ENCODE measurements at regions of chr17 and their contacts with region 1.

Region 1: GRCh38 chr17:40803617-40804082 is 3.9 kb upstream of the KRT28 start:
- DNase-seq: peak; percentile 34 to 74 (median 54)
- ATAC-seq: peak; percentile 90
- H3K4me3 ChIP-seq: no peak overlapping the region
- H3K4me3 Mint-ChIP-seq: peak overlapping the region in 1 of 10 donors; percentile 33
- H3K27ac ChIP-seq: no peak overlapping the region
- H3K27ac Mint-ChIP-seq: no peak overlapping the region
- H3K4me1 ChIP-seq: no peaks in the 10 kb centered on the region
- H3K4me1 Mint-ChIP-seq: peaks cover 0 to 4% (median 3%) of the 10 kb centered on the region in 7 donors
- H3K27me3 ChIP-seq: peaks cover 0 to 4% of the 10 kb centered on the region in 2 donors
- H3K27me3 Mint-ChIP-seq: peaks cover 33 to 51% (median 48%) of the 10 kb centered on the region in 5 donors

Region 2: DNA sequence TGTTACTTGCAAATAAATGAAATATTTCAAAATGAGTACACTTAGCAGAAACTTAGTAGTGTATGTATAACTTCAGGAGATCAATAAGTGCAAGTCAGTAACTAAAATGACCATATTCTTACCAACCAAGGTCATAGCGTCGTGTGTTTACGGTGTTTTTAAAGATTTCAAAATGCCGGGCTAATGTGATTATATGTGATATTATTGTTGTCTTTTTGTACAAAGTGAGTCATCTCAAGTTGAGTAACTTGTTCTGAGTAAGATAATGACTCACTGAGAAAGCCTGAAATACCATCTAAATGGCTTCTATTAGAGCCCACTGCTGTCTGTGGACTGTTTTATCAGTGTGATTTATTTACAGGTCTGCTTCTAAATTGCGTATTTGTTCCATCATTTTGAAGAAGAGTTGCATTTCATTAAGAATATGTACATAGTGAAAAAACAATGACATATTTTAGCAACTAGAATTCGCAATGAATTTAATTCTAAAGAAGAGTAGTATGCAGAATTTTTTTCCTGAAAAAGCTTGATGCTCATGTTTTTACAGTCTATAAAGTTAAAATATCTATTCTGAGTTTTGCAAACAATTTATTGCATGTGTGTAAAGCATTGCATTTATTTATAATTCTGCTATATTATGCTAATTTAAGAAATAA is 50.6 kb after region 1 on chr17:
- CTCF ChIA-PET with region 1: no interaction called
- POLR2A ChIA-PET with region 1: no interaction called
- intact Hi-C with region 1: loop called in 1 of 2 experiments (anchors 1 kb)
- DNase-seq: no peak
- ATAC-seq: no peak
- H3K4me3 ChIP-seq: no peak overlapping the region
- H3K4me3 Mint-ChIP-seq: no peak overlapping the region
- H3K27ac ChIP-seq: no peak overlapping the region
- H3K27ac Mint-ChIP-seq: no peak overlapping the region
- H3K4me1 ChIP-seq: no peaks in the 10 kb centered on the region
- H3K4me1 Mint-ChIP-seq: peaks cover 0 to 6% (median 0%) of the 10 kb centered on the region in 7 donors
- H3K27me3 ChIP-seq: no peaks in the 10 kb centered on the region
- H3K27me3 Mint-ChIP-seq: peaks cover 19 to 53% (median 27%) of the 10 kb centered on the region in 5 donors

Region 3: DNA sequence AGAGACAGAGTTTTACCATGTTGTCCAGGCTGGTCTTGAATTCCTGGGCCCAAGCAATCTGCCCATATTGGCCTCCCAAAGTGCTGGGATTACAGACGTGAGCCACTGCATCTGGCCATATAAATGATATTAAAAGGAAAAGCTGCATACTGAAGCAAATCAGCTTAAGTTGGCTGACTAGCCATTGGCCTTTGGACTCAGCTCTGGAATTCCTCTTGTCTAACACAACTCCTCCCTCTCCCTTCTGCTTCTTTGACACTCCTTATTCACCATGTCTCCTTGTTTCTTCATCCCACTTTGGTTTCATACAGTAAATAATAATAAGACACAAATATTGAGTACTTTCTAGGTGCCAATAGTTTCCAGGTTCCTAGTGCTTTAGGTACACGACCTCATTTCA is 55.9 kb after region 1 on chr17:
- CTCF ChIA-PET with region 1: interaction called, 10 read pairs
- POLR2A ChIA-PET with region 1: no interaction called
- intact Hi-C with region 1: loop called in 1 of 2 experiments (anchors 1 kb)
- DNase-seq: no peak
- ATAC-seq: no peak
- H3K4me3 ChIP-seq: no peak overlapping the region
- H3K4me3 Mint-ChIP-seq: no peak overlapping the region
- H3K27ac ChIP-seq: no peak overlapping the region
- H3K27ac Mint-ChIP-seq: no peak overlapping the region
- H3K4me1 ChIP-seq: no peaks in the 10 kb centered on the region
- H3K4me1 Mint-ChIP-seq: peaks cover 0 to 6% (median 0%) of the 10 kb centered on the region in 7 donors
- H3K27me3 ChIP-seq: no peaks in the 10 kb centered on the region
- H3K27me3 Mint-ChIP-seq: peaks cover 0 to 18% (median 15%) of the 10 kb centered on the region in 5 donors